Naive thymus-derived CD4-positive, alpha-beta T cell (primary cell): ENCODE measurements at regions of chr12 and their contacts with region 1.

Region 1: GRCh38 chr12:71663561-71664294 is at the start of gene ZFC3H1:
- DNase-seq: peak; percentile 78 to 97 (median 95)
- ATAC-seq: peak; percentile 87
- H3K4me3 ChIP-seq: peak within 1 kb of the TSS; percentile 76
- H3K4me3 Mint-ChIP-seq: peak within 1 kb of the TSS; percentile 94 to 100 (median 99)
- H3K27ac ChIP-seq: peak within 1 kb of the TSS; percentile 97
- H3K27ac Mint-ChIP-seq: peak within 1 kb of the TSS; percentile 96 to 100 (median 99)
- H3K4me1 ChIP-seq: peaks cover 25 to 29% of the 10 kb centered on the region in 2 donors
- H3K4me1 Mint-ChIP-seq: peaks cover 34 to 70% (median 60%) of the 10 kb centered on the region in 7 donors
- H3K27me3 ChIP-seq: no peaks in the 10 kb centered on the region
- H3K27me3 Mint-ChIP-seq: no peaks in the 10 kb centered on the region
- total RNA-seq, gene ZFC3H1: 74.6 to 147 (median 133) TPM

Region 2: DNA sequence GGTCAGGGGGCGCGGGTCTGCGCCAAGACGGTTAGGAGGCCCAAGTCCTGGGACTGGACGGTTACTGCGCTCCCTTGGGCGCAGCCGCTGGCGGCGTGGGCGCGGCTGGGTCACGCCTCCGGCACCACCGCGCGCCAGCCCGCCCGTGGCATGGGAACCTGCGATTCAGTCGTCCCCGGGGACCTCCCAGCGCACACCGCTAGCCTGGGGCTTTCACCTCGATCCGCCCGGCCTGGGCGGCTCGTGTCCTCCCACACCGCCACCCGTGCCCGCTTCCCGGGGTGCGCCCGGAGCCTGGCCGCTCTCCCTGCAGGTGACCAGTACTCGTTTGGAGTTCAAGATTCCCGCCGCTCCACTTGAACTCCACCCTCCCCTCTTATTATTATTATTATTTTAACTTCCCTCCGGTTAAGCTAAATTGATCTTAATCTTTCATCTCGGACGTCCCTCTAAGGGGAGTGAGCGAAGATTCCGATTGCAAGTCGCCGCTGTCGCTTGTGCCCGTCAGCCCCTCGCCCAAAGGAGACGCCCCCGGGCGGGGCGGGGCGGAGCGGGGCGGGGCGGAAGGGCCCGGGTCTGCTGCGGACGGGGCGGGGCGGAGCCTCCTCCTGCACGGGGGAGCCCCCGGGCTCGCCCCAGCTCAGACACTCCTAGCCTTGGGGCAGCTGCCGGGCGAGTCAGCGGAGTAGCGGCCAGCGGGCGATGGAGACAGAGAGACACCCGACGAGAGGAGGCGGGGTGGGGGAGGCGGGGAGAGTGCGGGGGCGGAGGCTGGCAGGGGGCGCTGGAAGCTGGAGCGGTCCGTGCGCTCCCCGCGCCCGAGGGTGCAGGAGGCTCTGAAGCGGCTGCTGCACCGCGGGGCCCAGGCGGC is 1297.8 kb before region 1 on chr12 and contains the start of gene KCNMB4:
- CTCF ChIA-PET with region 1: no interaction called
- POLR2A ChIA-PET with region 1: no interaction called
- intact Hi-C with region 1: loop called in 1 of 2 experiments (anchors 5 kb)
- DNase-seq: peak; percentile 48 to 85 (median 68)
- ATAC-seq: peak; percentile 86
- H3K4me3 ChIP-seq: peak within 1 kb of the TSS; percentile 70
- H3K4me3 Mint-ChIP-seq: peak within 1 kb of the TSS; percentile 94 to 99 (median 97)
- H3K27ac ChIP-seq: peak within 1 kb of the TSS; percentile 71
- H3K27ac Mint-ChIP-seq: peak within 1 kb of the TSS; percentile 58 to 91 (median 89)
- H3K4me1 ChIP-seq: peaks cover 16 to 19% of the 10 kb centered on the region in 2 donors
- H3K4me1 Mint-ChIP-seq: peaks cover 12 to 41% (median 34%) of the 10 kb centered on the region in 7 donors
- H3K27me3 ChIP-seq: peaks cover 0 to 4% of the 10 kb centered on the region in 2 donors
- H3K27me3 Mint-ChIP-seq: peaks cover 0 to 54% (median 0%) of the 10 kb centered on the region in 5 donors
- total RNA-seq, gene KCNMB4: 0.31 to 1.9 (median 1.4) TPM

Region 3: DNA sequence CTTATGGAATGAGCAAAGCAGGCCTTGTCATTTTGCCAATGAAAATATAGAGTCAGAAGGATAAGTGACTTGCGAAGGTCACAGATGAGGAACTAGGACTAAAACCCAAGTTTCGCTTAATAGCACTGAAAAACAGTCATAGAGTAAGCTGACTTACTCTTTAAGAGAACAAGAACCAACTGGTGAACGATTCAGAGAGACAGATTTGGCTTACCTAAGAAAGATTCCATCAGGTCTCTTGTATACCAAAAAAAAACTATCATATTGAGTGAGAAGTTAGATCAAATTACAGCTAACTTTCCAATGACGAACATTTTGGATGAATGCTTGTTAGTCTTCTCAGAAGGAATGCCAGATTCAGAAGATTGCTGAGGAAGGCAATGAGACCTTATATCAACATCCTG is 74.2 kb before region 1 on chr12:
- CTCF ChIA-PET with region 1: no interaction called
- POLR2A ChIA-PET with region 1: no interaction called
- intact Hi-C with region 1: no loop called
- DNase-seq: no peak
- ATAC-seq: no peak
- H3K4me3 ChIP-seq: no peak overlapping the region
- H3K4me3 Mint-ChIP-seq: no peak overlapping the region
- H3K27ac ChIP-seq: no peak overlapping the region
- H3K27ac Mint-ChIP-seq: no peak overlapping the region
- H3K4me1 ChIP-seq: no peaks in the 10 kb centered on the region
- H3K4me1 Mint-ChIP-seq: peaks cover 0 to 2% (median 0%) of the 10 kb centered on the region in 7 donors
- H3K27me3 ChIP-seq: no peaks in the 10 kb centered on the region
- H3K27me3 Mint-ChIP-seq: peaks cover 13 to 45% (median 42%) of the 10 kb centered on the region in 5 donors

Region 4: GRCh38 chr12:71626098-71626497 is 37.6 kb before region 1 on chr12:
- CTCF ChIA-PET with region 1: no interaction called
- POLR2A ChIA-PET with region 1: interaction called, 16 read pairs
- intact Hi-C with region 1: loop called in 1 of 2 experiments (anchors 5 kb)
- DNase-seq: no peak
- ATAC-seq: no peak
- H3K4me3 ChIP-seq: no peak overlapping the region
- H3K4me3 Mint-ChIP-seq: peak overlapping the region in 8 of 10 donors; percentile 23 to 68 (median 42)
- H3K27ac ChIP-seq: peak overlapping the region; percentile 15
- H3K27ac Mint-ChIP-seq: peak overlapping the region; percentile 21 to 86 (median 70)
- H3K4me1 ChIP-seq: peaks cover 0 to 6% of the 10 kb centered on the region in 2 donors
- H3K4me1 Mint-ChIP-seq: peaks cover 14 to 40% (median 25%) of the 10 kb centered on the region in 7 donors
- H3K27me3 ChIP-seq: no peaks in the 10 kb centered on the region
- H3K27me3 Mint-ChIP-seq: no peaks in the 10 kb centered on the region

Region 5: DNA sequence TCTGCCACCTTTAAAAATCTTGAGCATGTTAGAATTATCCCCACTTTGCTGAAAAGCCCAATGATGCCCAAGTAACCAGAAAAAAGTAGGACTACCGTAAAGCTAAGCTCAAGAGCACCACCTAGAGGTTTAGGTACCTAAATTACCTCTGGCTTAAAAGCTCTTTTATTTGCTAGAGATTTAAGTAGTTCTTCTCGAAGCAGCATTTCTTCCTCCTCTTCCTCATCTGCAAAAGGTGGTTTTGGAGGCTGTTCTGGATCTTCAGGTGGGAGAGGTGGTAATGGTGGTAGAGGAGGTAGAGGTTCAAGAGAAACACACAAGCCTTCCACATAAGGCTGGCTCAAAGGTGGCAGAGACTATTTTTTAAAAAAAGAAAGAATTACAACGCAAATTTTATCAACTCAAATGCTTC is 27.0 kb before region 1 on chr12:
- CTCF ChIA-PET with region 1: interaction called, 7 read pairs
- POLR2A ChIA-PET with region 1: interaction called, 9 read pairs
- intact Hi-C with region 1: loop called (anchors 1 to 2 kb)
- DNase-seq: peak in 7 of 9 donors; percentile 27 to 65 (median 58)
- ATAC-seq: peak; percentile 84
- H3K4me3 ChIP-seq: no peak overlapping the region
- H3K4me3 Mint-ChIP-seq: no peak overlapping the region
- H3K27ac ChIP-seq: no peak overlapping the region
- H3K27ac Mint-ChIP-seq: peak overlapping the region in 8 of 9 donors; percentile 8 to 91 (median 59)
- H3K4me1 ChIP-seq: no peaks in the 10 kb centered on the region
- H3K4me1 Mint-ChIP-seq: peaks cover 0 to 18% (median 12%) of the 10 kb centered on the region in 7 donors
- H3K27me3 ChIP-seq: no peaks in the 10 kb centered on the region
- H3K27me3 Mint-ChIP-seq: no peaks in the 10 kb centered on the region

Region 6: DNA sequence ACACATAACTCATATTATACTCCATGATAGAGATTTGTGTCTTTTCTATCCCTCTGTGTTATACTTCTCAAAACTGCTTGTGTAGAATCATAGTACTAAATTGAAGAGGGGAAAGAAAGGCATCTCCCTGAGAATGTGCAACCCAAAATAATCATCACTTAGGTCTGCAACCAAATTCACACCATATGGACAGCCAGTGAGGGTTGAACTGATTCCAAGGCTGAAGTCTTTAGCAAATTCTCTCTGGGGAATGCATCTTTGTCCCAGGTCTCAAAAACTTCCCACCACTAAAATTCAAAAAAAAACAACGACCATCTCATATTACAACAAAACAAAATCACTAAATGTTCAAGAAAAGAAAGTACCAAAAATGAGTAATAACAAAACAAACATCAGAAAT is 11.1 kb before region 1 on chr12:
- CTCF ChIA-PET with region 1: no interaction called
- POLR2A ChIA-PET with region 1: interaction called, 11 read pairs
- intact Hi-C with region 1: no loop called
- DNase-seq: no peak
- ATAC-seq: no peak
- H3K4me3 ChIP-seq: no peak overlapping the region
- H3K4me3 Mint-ChIP-seq: no peak overlapping the region
- H3K27ac ChIP-seq: no peak overlapping the region
- H3K27ac Mint-ChIP-seq: no peak overlapping the region
- H3K4me1 ChIP-seq: peaks cover 31 to 35% of the 10 kb centered on the region in 2 donors
- H3K4me1 Mint-ChIP-seq: peaks cover 28 to 58% (median 42%) of the 10 kb centered on the region in 7 donors
- H3K27me3 ChIP-seq: no peaks in the 10 kb centered on the region
- H3K27me3 Mint-ChIP-seq: no peaks in the 10 kb centered on the region

Region 7: GRCh38 chr12:71685914-71686665 is 22.4 kb after region 1 on chr12 and contains the start of gene TMEM19:
- CTCF ChIA-PET with region 1: interaction called, 35 read pairs
- POLR2A ChIA-PET with region 1: interaction called, 214 read pairs
- intact Hi-C with region 1: loop called (anchors 1 kb)
- DNase-seq: peak; percentile 78 to 88 (median 86)
- ATAC-seq: peak; percentile 90
- H3K4me3 ChIP-seq: peak within 1 kb of the TSS; percentile 96
- H3K4me3 Mint-ChIP-seq: peak within 1 kb of the TSS; percentile 85 to 99 (median 94)
- H3K27ac ChIP-seq: peak within 1 kb of the TSS; percentile 87
- H3K27ac Mint-ChIP-seq: peak within 1 kb of the TSS; percentile 85 to 97 (median 91)
- H3K4me1 ChIP-seq: peaks cover 21 to 23% of the 10 kb centered on the region in 2 donors
- H3K4me1 Mint-ChIP-seq: peaks cover 15 to 55% (median 38%) of the 10 kb centered on the region in 7 donors
- H3K27me3 ChIP-seq: no peaks in the 10 kb centered on the region
- H3K27me3 Mint-ChIP-seq: no peaks in the 10 kb centered on the region
- total RNA-seq, gene TMEM19: 13.9 to 17.7 (median 14.7) TPM

Region 8: DNA sequence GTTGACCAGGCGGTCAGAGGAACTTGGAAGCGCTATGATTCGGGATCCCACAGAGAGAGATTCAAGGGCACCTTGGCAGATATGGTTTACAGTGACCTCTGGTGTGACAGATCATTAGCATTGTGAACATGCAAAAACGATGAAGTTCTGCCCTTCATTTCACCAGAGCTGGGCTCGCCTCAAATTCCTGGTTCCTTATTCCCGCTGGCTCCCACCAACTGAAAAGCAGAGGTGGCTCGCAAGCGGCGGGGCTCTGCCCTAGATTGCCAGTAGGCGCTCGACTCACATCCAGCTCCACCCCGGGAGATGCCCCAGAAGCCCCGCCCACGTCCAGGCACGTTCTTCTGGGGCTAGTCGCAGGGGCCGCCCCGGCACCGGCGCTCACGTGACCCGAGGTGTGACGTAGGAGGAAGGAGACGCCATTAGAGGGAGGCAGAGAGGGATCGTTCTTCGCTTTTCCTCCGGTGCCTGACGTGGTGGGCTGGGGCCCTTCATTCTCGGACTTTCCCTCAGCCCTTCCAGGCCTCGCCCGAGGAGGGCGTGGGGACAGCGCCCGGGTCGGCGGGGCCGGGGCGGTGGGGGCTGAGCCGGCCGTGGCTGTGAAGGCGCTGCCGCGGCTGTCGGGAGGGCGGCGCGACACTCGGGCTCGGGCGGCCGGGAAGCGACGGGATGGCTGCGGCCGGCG is 90.9 kb after region 1 on chr12 and contains the start of gene RAB21:
- CTCF ChIA-PET with region 1: interaction called, 3 read pairs
- POLR2A ChIA-PET with region 1: interaction called, 29 read pairs
- intact Hi-C with region 1: loop called (anchors 1 kb)
- DNase-seq: peak; percentile 95 to 99 (median 97)
- ATAC-seq: peak; percentile 94
- H3K4me3 ChIP-seq: peak within 1 kb of the TSS; percentile 70
- H3K4me3 Mint-ChIP-seq: peak within 1 kb of the TSS; percentile 86 to 95 (median 94)
- H3K27ac ChIP-seq: peak within 1 kb of the TSS; percentile 100
- H3K27ac Mint-ChIP-seq: peak within 1 kb of the TSS; percentile 91 to 98 (median 95)
- H3K4me1 ChIP-seq: peaks cover 10 to 11% of the 10 kb centered on the region in 2 donors
- H3K4me1 Mint-ChIP-seq: peaks cover 21 to 47% (median 43%) of the 10 kb centered on the region in 7 donors
- H3K27me3 ChIP-seq: no peaks in the 10 kb centered on the region
- H3K27me3 Mint-ChIP-seq: peaks cover 0 to 32% (median 5%) of the 10 kb centered on the region in 5 donors
- total RNA-seq, gene RAB21: 53.6 to 81.7 (median 73.7) TPM

Region 9: DNA sequence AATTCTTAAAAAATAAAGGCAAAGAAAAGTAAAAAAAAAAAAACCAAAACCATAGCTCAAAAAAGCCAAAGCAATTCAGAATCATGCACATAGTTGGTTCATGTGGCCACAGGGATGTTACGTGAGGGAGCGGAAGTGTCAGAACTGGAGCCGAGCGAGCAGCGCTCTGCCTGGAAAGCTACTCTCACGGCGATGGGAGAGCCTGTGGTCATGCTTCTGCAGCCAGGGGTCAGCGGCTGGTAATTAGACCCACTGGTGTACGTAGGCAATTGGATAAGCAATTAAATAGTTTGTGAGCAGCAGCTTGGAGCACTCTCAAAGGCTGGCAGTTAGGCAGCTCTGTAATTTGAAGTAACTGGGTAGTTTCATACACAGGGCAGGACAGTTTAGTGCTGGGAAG is 666.6 kb after region 1 on chr12:
- CTCF ChIA-PET with region 1: no interaction called
- POLR2A ChIA-PET with region 1: no interaction called
- intact Hi-C with region 1: no loop called
- DNase-seq: no peak
- ATAC-seq: no peak
- H3K4me3 ChIP-seq: no peak overlapping the region
- H3K4me3 Mint-ChIP-seq: no peak overlapping the region
- H3K27ac ChIP-seq: no peak overlapping the region
- H3K27ac Mint-ChIP-seq: no peak overlapping the region
- H3K4me1 ChIP-seq: no peaks in the 10 kb centered on the region
- H3K4me1 Mint-ChIP-seq: no peaks in the 10 kb centered on the region
- H3K27me3 ChIP-seq: no peaks in the 10 kb centered on the region
- H3K27me3 Mint-ChIP-seq: peaks cover 0 to 4% (median 0%) of the 10 kb centered on the region in 5 donors